Adrenal gland (tissue), 19 donors: ENCODE measurements at regions of chr1 and their contacts with region 1.

Region 1: DNA sequence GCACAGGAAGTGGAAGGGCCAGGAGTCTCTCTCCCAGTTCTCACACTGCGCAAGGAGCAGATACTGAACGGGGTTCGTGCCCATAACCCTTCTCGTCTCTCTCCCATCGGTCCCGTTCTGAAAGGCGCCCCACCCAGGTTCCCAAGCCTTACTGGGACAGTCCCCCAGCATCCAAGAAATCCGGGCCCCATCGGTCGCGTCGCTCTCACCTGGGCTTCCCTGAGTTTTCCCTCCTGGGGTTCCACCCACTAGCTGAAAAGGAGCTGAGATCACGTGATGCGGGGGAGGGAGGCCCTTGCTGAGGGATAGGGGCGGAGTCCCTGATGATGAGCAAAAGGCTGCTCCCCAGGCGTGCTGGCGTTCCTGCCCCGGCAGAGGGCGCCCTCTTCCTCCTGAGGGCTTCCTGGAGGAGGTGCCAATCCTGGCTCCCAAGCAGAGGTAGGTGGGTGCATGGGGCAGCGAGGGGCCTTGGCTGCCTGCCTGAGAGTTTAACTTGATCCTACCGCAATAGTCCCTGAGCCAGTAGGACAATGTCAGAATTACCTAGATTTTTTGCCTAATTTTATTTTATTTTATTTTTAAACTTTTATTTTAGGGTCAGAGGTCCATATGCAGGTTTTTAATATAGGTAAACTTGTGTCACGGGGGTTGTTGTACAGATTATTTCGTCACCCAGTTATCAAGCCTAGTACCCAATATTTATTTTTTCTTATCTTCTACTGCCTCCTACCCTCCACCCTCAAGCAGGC is at the start of gene SPOCD1:
- DNase-seq: peak; percentile 64 to 89 (median 72)
- H3K4me3 ChIP-seq: no peak within 1 kb of the TSS
- H3K27ac ChIP-seq: no peak within 1 kb of the TSS
- H3K4me1 ChIP-seq: no peaks in the 10 kb centered on the region
- H3K27me3 ChIP-seq: no peaks in the 10 kb centered on the region
- CTCF ChIP-seq: peak; percentile 44 to 74 (median 58)
- POLR2A ChIP-seq: no peak
- total RNA-seq, gene SPOCD1: 0.09 to 1.9 (median 0.61) TPM

Region 2: GRCh38 chr1:31959521-31960340 is 143.8 kb after region 1 on chr1:
- intact Hi-C with region 1: loop called (anchors 10 kb)
- DNase-seq: peak in 1 of 7 donors; percentile 46
- H3K4me3 ChIP-seq: no peak overlapping the region
- H3K27ac ChIP-seq: peak overlapping the region in 1 of 5 donors; percentile 32
- H3K4me1 ChIP-seq: peaks cover 16 to 30% of the 10 kb centered on the region in 2 donors
- H3K27me3 ChIP-seq: no peaks in the 10 kb centered on the region
- CTCF ChIP-seq: no peak
- POLR2A ChIP-seq: no peak